ENCODE measurements at regions of chr10 and their contacts with region 1.

Region 1: GRCh38 chr10:107043461-107043860 is 121.0 kb downstream of the SORCS1 start:
- DNase-seq: no peak
- H3K4me3 ChIP-seq: no peak overlapping the region
- H3K27ac ChIP-seq: no peak overlapping the region
- H3K4me1 ChIP-seq: no peaks in the 10 kb centered on the region
- H3K27me3 ChIP-seq: no peaks in the 10 kb centered on the region
- CTCF ChIP-seq: no peak
- EP300 ChIP-seq: no peak
- POLR2A ChIP-seq: no peak

Region 2: GRCh38 chr10:105278439-105278838 is 1765.0 kb before region 1 on chr10:
- intact Hi-C with region 1: loop called in 1 of 4 experiments (anchors 5 kb)
- DNase-seq: no peak
- H3K4me3 ChIP-seq: no peak overlapping the region
- H3K27ac ChIP-seq: no peak overlapping the region
- H3K4me1 ChIP-seq: no peaks in the 10 kb centered on the region
- H3K27me3 ChIP-seq: no peaks in the 10 kb centered on the region
- CTCF ChIP-seq: no peak
- EP300 ChIP-seq: no peak
- POLR2A ChIP-seq: no peak

Region 3: GRCh38 chr10:107091126-107091525 is 47.7 kb after region 1 on chr10:
- intact Hi-C with region 1: no loop called
- DNase-seq: no peak
- H3K4me3 ChIP-seq: no peak overlapping the region
- H3K27ac ChIP-seq: no peak overlapping the region
- H3K4me1 ChIP-seq: no peaks in the 10 kb centered on the region
- H3K27me3 ChIP-seq: no peaks in the 10 kb centered on the region
- CTCF ChIP-seq: no peak
- EP300 ChIP-seq: no peak
- POLR2A ChIP-seq: no peak

Region 4: DNA sequence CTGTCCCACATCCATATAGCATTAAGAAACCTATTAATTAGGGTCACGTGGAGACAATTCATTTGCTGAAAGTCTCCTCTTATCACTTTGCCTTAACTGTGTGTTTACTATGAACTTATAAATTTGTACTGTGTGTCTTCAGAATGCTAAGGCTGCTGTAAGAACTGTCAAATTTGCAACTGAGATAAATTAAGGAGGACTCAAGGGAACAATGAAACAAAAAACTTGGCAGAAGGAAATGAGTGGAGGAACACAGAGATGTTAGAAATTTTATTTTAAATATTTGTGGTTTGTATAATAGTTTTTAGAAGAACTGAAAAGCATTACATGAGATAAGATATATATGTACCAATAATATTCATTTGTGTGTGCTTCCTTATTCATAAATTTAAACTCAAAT is 1126.4 kb after region 1 on chr10:
- intact Hi-C with region 1: no loop called
- DNase-seq: no peak
- H3K4me3 ChIP-seq: no peak overlapping the region
- H3K27ac ChIP-seq: no peak overlapping the region
- H3K4me1 ChIP-seq: no peaks in the 10 kb centered on the region
- H3K27me3 ChIP-seq: no peaks in the 10 kb centered on the region
- CTCF ChIP-seq: no peak
- EP300 ChIP-seq: no peak
- POLR2A ChIP-seq: no peak

Measured in ovary (tissue), 10 donors.